Naive thymus-derived CD4-positive, alpha-beta T cell (primary cell): ENCODE measurements at regions of chr20 and their contacts with region 1.

Region 1: DNA sequence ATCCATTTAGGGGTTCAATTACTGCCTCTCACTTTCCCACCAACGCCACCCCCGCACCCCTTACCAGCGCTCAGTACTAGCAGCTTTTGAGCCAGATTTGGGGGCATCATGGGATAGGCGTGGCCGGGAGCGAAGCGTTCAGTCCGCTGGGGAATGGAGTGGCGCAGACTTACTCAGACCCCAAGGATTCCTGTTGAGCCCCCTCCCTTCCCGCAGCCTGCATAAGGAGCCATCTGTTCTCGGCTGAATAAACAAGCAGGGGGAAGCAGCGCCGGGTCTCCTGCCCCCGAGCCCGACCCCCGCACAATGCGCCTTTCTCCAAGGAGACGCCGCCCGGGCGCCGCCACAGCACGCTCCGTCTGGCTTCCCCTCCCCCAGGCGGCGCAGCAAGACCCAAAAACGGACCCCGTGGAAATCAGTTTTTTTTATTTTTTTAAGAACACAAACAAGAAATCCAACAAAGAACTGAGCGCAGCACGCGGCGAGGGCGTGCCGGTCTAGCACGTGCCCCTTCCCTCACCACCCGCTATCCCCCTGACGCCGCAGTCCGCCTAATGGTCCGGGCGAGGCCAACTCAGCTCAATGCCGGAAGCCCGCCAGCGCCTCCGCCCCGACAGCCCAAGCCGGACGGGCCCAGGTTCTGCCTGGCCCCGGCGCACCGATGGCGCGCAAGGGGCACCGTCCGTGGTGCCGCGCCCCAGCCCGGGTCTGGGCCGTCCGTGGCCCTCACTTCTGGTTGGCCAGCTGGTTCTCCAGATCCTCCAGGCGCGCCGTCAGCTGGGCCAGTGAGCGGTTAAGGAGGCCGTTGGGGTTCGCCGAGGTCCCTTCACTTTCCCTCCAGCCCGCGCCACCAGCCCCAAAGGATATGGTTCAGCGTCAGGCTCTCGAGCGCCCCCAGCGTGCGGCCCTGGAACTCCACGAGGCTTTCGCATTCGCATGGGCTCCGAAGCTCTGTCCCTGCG is 13.3 kb upstream of the RBPJL start:
- DNase-seq: peak; percentile 33 to 89 (median 68)
- ATAC-seq: peak; percentile 93
- H3K4me3 ChIP-seq: peak overlapping the region; percentile 54
- H3K4me3 Mint-ChIP-seq: peak overlapping the region; percentile 57 to 83 (median 78)
- H3K27ac ChIP-seq: no peak overlapping the region
- H3K27ac Mint-ChIP-seq: no peak overlapping the region
- H3K4me1 ChIP-seq: peaks cover 4 to 14% of the 10 kb centered on the region in 2 donors
- H3K4me1 Mint-ChIP-seq: peaks cover 4 to 21% (median 11%) of the 10 kb centered on the region in 7 donors
- H3K27me3 ChIP-seq: peaks cover 0 to 10% of the 10 kb centered on the region in 2 donors
- H3K27me3 Mint-ChIP-seq: peaks cover 31 to 48% (median 38%) of the 10 kb centered on the region in 5 donors

Region 2: DNA sequence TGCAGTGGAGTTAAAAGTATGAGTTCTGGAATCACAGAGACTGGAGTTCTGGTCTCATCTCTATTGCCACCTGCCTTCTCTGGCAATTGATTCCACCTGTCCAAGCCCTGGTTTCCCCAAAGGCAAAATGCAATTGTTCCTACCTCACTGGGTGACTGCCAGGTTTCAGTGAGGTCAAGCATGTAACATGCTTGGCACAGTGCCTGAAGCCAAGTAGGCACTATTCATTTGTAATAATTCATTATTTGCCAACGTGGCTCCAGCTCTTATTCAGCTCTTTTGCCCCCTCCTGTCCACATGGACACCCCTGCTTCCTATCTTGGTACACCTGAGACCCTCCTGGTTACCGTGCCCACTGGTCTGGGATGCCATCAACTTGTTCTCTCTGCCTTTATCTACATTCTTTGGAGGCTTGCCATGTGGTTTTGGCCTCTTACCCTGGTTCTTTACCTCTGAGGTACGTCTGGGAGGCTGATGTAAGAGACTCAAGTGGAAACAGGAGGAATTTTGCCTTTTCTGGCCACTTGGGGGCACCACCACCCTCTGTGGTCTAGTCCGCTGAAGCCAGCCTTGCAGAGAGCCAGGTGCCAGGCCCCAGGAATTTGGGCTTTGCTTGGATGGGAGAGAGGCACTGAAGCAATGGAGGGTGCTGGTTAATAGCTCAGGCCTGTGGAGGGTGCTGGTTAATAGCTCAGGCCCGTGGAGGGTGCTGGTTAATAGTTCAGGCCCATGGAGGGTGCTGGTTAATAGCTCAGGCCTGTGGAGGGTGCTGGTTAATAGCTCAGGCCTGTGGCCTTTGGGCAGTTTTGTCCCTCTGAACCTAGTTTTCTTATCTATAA is 545.9 kb before region 1 on chr20:
- CTCF ChIA-PET with region 1: interaction called, 3 read pairs
- POLR2A ChIA-PET with region 1: no interaction called
- intact Hi-C with region 1: loop called in 1 of 2 experiments (anchors 5 kb)
- DNase-seq: peak in 8 of 9 donors; percentile 28 to 53 (median 42)
- ATAC-seq: peak; percentile 59
- H3K4me3 ChIP-seq: no peak overlapping the region
- H3K4me3 Mint-ChIP-seq: peak overlapping the region; percentile 28 to 83 (median 69)
- H3K27ac ChIP-seq: no peak overlapping the region
- H3K27ac Mint-ChIP-seq: peak overlapping the region in 3 of 9 donors; percentile 9 to 80 (median 29)
- H3K4me1 ChIP-seq: peaks cover 0 to 6% of the 10 kb centered on the region in 2 donors
- H3K4me1 Mint-ChIP-seq: peaks cover 9 to 18% (median 16%) of the 10 kb centered on the region in 7 donors
- H3K27me3 ChIP-seq: peaks cover 0 to 4% of the 10 kb centered on the region in 2 donors
- H3K27me3 Mint-ChIP-seq: peaks cover 10 to 41% (median 31%) of the 10 kb centered on the region in 5 donors

Region 3: GRCh38 chr20:45044084-45044573 is 249.2 kb before region 1 on chr20:
- CTCF ChIA-PET with region 1: interaction called, 7 read pairs
- POLR2A ChIA-PET with region 1: no interaction called
- intact Hi-C with region 1: loop called (anchors 1 to 2 kb)
- DNase-seq: peak in 7 of 9 donors; percentile 27 to 69 (median 60)
- ATAC-seq: peak; percentile 92
- H3K4me3 ChIP-seq: no peak overlapping the region
- H3K4me3 Mint-ChIP-seq: peak overlapping the region in 5 of 10 donors; percentile 0 to 31 (median 0)
- H3K27ac ChIP-seq: no peak overlapping the region
- H3K27ac Mint-ChIP-seq: peak overlapping the region; percentile 5 to 78 (median 61)
- H3K4me1 ChIP-seq: peaks cover 22 to 23% of the 10 kb centered on the region in 2 donors
- H3K4me1 Mint-ChIP-seq: peaks cover 34 to 85% (median 75%) of the 10 kb centered on the region in 7 donors
- H3K27me3 ChIP-seq: no peaks in the 10 kb centered on the region
- H3K27me3 Mint-ChIP-seq: no peaks in the 10 kb centered on the region

Region 4: DNA sequence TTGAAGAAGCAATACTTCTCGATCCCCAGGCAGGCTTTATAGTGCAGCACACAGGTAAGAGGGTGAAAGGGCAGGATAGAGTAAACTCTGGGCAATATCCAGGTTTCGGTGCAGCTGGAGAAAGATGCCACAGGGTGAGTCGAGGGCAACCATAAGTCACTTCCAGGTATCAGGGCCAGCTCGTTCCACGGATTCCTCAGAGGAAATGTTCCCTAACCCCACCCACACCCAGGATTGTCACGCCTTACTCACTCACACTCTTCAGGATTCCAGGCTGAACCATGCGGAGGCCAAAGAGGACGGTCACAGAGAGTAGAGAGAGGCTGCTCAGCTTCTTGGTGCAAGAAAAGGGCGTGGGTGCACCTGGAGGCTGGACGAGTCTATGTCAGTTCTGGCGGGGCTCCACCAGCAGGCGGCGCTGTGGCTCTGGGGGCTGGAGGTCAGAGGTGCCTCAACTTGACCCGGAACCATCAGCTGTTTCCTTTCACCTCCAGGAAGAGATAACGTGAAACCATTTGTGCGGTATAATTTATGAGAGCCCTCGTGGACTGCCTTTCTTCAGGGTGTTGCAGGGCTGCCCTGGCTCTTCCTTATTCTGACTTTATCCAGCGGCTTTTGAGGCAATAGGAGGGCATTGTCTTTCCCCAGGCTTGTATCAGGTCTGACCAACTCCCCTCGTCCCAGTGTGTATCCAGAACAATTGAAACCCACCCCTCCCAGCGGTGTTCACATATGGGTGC is 154.6 kb before region 1 on chr20:
- CTCF ChIA-PET with region 1: no interaction called
- POLR2A ChIA-PET with region 1: no interaction called
- intact Hi-C with region 1: loop called in 1 of 2 experiments (anchors 2 kb)
- DNase-seq: peak in 6 of 9 donors; percentile 6 to 73 (median 12)
- ATAC-seq: peak; percentile 57
- H3K4me3 ChIP-seq: no peak overlapping the region
- H3K4me3 Mint-ChIP-seq: no peak overlapping the region
- H3K27ac ChIP-seq: no peak overlapping the region
- H3K27ac Mint-ChIP-seq: no peak overlapping the region
- H3K4me1 ChIP-seq: no peaks in the 10 kb centered on the region
- H3K4me1 Mint-ChIP-seq: no peaks in the 10 kb centered on the region
- H3K27me3 ChIP-seq: peaks cover 0 to 5% of the 10 kb centered on the region in 2 donors
- H3K27me3 Mint-ChIP-seq: peaks cover 9 to 17% (median 11%) of the 10 kb centered on the region in 5 donors

Region 5: GRCh38 chr20:45322952-45323383 is 29.6 kb after region 1 on chr20:
- CTCF ChIA-PET with region 1: interaction called, 10 read pairs
- POLR2A ChIA-PET with region 1: no interaction called
- intact Hi-C with region 1: no loop called
- DNase-seq: no peak
- ATAC-seq: peak; percentile 34
- H3K4me3 ChIP-seq: no peak overlapping the region
- H3K4me3 Mint-ChIP-seq: no peak overlapping the region
- H3K27ac ChIP-seq: no peak overlapping the region
- H3K27ac Mint-ChIP-seq: no peak overlapping the region
- H3K4me1 ChIP-seq: peaks cover 15 to 16% of the 10 kb centered on the region in 2 donors
- H3K4me1 Mint-ChIP-seq: peaks cover 10 to 42% (median 26%) of the 10 kb centered on the region in 7 donors
- H3K27me3 ChIP-seq: no peaks in the 10 kb centered on the region
- H3K27me3 Mint-ChIP-seq: no peaks in the 10 kb centered on the region

Region 6: GRCh38 chr20:45427236-45428149 is 134.2 kb after region 1 on chr20:
- CTCF ChIA-PET with region 1: no interaction called
- POLR2A ChIA-PET with region 1: no interaction called
- intact Hi-C with region 1: no loop called
- DNase-seq: no peak
- ATAC-seq: peak; percentile 17
- H3K4me3 ChIP-seq: no peak overlapping the region
- H3K4me3 Mint-ChIP-seq: no peak overlapping the region
- H3K27ac ChIP-seq: no peak overlapping the region
- H3K27ac Mint-ChIP-seq: peak overlapping the region in 2 of 9 donors; percentile 7 to 20
- H3K4me1 ChIP-seq: no peaks in the 10 kb centered on the region
- H3K4me1 Mint-ChIP-seq: peaks cover 0 to 11% (median 4%) of the 10 kb centered on the region in 7 donors
- H3K27me3 ChIP-seq: no peaks in the 10 kb centered on the region
- H3K27me3 Mint-ChIP-seq: no peaks in the 10 kb centered on the region